Gastrocnemius medialis (tissue), 4 donors: ENCODE measurements at regions of chr20 and their contacts with region 1.

Region 1: DNA sequence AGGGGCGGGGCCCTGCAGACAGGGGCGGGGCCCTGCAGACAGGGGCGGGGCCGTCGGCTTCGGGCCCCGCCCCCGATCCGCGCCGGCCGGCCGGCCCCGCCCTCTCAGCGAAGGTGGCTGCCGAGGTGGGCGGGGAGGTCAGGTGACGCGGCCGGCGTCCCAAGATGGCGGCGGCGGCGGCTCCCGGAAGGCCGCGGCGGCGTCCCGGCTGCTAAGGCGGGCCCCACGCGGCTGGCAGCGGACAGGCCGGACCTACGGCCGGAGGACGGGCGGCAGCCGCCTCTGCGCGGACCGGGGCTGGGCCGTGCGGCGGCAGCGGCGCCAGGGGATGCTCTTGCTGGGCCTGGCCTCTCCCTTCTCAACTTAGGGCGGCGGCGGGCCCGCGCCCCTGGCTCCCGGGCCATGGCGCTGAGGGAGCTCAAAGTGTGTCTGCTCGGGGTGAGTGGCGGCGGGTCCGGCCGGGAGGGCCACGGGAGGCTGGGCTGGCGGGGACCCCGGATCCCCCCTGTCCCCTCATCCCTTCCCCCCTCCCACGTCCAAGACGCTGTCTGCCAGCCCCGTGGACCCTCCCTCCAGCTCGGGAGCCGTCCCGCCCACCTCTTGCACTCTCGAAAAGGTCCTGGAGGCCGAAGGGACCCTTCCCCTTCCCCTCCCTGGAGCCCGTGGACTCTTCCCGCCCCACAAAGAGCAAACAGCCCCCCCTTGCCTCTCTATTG is at the start of gene RAB22A:
- DNase-seq: peak; percentile 64 to 70
- ATAC-seq: peak; percentile 89 to 92
- H3K4me3 ChIP-seq: peak within 1 kb of the TSS; percentile 63 to 94 (median 86)
- H3K27ac ChIP-seq: peak within 1 kb of the TSS; percentile 80 to 89 (median 83)
- H3K4me1 ChIP-seq: peaks cover 15 to 16% of the 10 kb centered on the region in 2 donors
- H3K27me3 ChIP-seq: no peaks in the 10 kb centered on the region
- CTCF ChIP-seq: peak in 2 of 5 experiments; percentile 11 to 27
- POLR2A ChIP-seq: peak; percentile 95 to 96
- total RNA-seq, gene RAB22A: 8.0 to 10.9 (median 9.3) TPM

Region 2: DNA sequence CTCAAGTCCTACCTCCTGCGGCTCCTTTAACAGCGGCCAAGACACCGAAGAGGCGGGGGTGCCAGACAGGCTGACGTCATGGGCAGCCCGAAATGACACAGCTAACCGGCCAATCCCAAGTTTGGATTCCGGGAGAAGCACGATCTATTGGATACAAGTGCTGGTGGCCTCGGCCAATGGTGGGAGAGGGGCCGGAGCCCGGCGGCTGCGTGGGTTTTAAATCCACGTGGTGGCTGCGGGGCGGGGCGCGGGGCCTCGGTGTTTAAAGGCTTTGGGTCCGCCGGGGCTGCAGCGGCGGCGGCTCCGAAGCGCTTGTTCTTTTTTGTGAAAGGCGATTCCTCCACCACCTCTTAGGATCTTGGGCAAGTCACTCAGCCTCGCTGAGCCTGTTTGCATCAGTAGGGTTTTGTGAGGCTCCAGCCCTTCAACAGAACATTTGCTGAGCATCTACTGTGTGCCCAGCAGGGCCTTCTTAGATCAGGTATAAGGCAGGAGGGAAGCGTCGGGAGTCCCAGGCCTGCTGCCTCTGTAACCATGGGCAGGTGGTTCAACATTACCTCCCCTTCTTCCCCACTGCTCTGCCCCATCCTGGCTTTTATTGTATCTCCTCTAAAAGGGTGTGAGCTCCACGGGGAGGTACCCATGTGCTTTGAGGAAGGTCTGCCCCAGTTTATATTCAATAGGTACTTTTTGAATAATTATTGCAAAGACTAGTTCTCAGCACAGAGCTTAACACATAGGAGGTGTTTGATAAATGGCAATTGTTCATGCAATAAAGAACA is 591.1 kb before region 1 on chr20:
- in situ Hi-C with region 1: no loop called
- intact Hi-C with region 1: loop called (anchors 1 kb)
- DNase-seq: peak; percentile 97 to 98
- ATAC-seq: peak; percentile 92 to 96
- H3K4me3 ChIP-seq: peak overlapping the region; percentile 32 to 45 (median 36)
- H3K27ac ChIP-seq: peak overlapping the region; percentile 21 to 79 (median 57)
- H3K4me1 ChIP-seq: peaks cover 49 to 54% of the 10 kb centered on the region in 2 donors
- H3K27me3 ChIP-seq: no peaks in the 10 kb centered on the region
- CTCF ChIP-seq: no peak
- POLR2A ChIP-seq: no peak

Region 3: DNA sequence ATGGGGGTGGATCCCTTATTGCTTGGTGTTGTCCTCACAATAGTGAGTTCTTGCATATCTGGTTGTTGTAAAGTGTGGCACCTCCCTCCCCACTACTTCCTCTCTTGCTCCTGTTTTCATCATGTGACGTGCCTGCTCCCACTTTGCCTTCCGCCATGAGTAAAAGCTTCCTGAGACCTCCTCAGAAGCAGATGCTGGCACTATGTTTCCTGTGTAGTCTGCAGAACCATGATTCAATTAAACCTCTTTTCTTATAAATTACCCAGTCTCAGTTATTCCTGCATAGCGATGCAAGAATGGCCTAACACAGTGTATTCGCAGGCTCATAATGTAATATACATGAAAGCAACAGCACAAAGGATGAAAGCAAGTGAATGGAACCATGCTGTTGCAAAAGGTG is 52.9 kb before region 1 on chr20:
- in situ Hi-C with region 1: no loop called
- intact Hi-C with region 1: loop called (anchors 5 kb)
- DNase-seq: no peak
- ATAC-seq: no peak
- H3K4me3 ChIP-seq: no peak overlapping the region
- H3K27ac ChIP-seq: no peak overlapping the region
- H3K4me1 ChIP-seq: no peaks in the 10 kb centered on the region
- H3K27me3 ChIP-seq: no peaks in the 10 kb centered on the region
- CTCF ChIP-seq: no peak
- POLR2A ChIP-seq: no peak

Region 4: GRCh38 chr20:58330687-58331086 is 21.0 kb after region 1 on chr20:
- in situ Hi-C with region 1: no loop called
- intact Hi-C with region 1: loop called (anchors 2 kb)
- DNase-seq: peak; percentile 65 to 77
- ATAC-seq: peak; percentile 90 to 93
- H3K4me3 ChIP-seq: no peak overlapping the region
- H3K27ac ChIP-seq: peak overlapping the region; percentile 60 to 80 (median 66)
- H3K4me1 ChIP-seq: peaks cover 33 to 53% of the 10 kb centered on the region in 2 donors
- H3K27me3 ChIP-seq: no peaks in the 10 kb centered on the region
- CTCF ChIP-seq: no peak
- POLR2A ChIP-seq: no peak

Region 5: GRCh38 chr20:58388882-58389323 is 79.2 kb after region 1 on chr20 and contains the start of gene VAPB:
- in situ Hi-C with region 1: no loop called
- intact Hi-C with region 1: loop called (anchors 1 kb)
- DNase-seq: peak; percentile 89 to 93
- ATAC-seq: peak; percentile 93 to 94
- H3K4me3 ChIP-seq: peak within 1 kb of the TSS; percentile 76 to 90 (median 87)
- H3K27ac ChIP-seq: peak within 1 kb of the TSS; percentile 94 to 97 (median 96)
- H3K4me1 ChIP-seq: peaks cover 41 to 43% of the 10 kb centered on the region in 2 donors
- H3K27me3 ChIP-seq: no peaks in the 10 kb centered on the region
- CTCF ChIP-seq: no peak
- POLR2A ChIP-seq: peak; percentile 83 to 86
- total RNA-seq, gene VAPB: 30.4 to 37.7 (median 32.8) TPM

Region 6: GRCh38 chr20:58447511-58448391 is 138.0 kb after region 1 on chr20:
- in situ Hi-C with region 1: no loop called
- intact Hi-C with region 1: loop called (anchors 10 kb)
- DNase-seq: peak; percentile 14 to 53
- ATAC-seq: peak; percentile 56 to 86
- H3K4me3 ChIP-seq: no peak overlapping the region
- H3K27ac ChIP-seq: no peak overlapping the region
- H3K4me1 ChIP-seq: no peaks in the 10 kb centered on the region
- H3K27me3 ChIP-seq: no peaks in the 10 kb centered on the region
- CTCF ChIP-seq: peak; percentile 49 to 72 (median 58)
- POLR2A ChIP-seq: no peak

Region 7: DNA sequence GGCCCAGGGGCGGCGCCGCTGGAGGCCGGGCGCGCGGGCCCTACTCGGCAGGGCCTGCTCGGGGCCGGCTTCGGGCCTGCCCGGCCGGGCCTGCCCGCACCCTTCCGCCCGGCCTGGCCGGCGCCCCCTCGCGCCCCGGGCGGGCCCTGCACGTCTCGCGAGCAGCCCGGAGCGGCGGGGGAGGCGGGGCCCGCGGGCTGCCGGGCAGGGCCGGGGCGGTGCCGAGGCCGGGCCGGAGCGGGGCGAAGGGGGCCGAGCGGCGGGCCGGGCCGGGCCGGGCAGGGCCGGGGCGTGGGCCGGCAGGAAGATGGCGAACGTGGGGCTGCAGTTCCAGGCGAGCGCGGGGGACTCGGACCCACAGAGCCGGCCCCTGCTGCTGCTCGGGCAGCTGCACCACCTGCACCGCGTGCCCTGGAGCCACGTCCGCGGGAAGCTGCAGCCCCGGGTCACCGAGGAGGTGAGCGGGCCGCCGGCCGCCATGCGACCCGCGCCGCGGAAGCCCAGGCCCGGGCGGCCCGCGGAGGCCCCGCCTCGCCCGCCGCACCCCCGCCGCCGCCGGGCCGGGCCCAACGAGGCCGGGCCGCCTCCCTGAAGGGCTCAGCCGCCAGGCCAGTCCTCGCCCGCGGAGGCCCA is 383.0 kb after region 1 on chr20 and contains the start of gene NPEPL1:
- in situ Hi-C with region 1: no loop called
- intact Hi-C with region 1: loop called (anchors 5 kb)
- DNase-seq: peak in 1 of 2 donors; percentile 58
- ATAC-seq: peak; percentile 80 to 81
- H3K4me3 ChIP-seq: peak within 1 kb of the TSS; percentile 51 to 66 (median 58)
- H3K27ac ChIP-seq: peak within 1 kb of the TSS; percentile 81 to 90 (median 86)
- H3K4me1 ChIP-seq: peaks cover 32 to 38% of the 10 kb centered on the region in 2 donors
- H3K27me3 ChIP-seq: no peaks in the 10 kb centered on the region
- CTCF ChIP-seq: peak in 4 of 5 experiments; percentile 35 to 61 (median 45)
- POLR2A ChIP-seq: peak in 1 of 2 donors; percentile 38
- total RNA-seq, gene NPEPL1: 18.1 to 51.5 (median 34.3) TPM

Region 8: DNA sequence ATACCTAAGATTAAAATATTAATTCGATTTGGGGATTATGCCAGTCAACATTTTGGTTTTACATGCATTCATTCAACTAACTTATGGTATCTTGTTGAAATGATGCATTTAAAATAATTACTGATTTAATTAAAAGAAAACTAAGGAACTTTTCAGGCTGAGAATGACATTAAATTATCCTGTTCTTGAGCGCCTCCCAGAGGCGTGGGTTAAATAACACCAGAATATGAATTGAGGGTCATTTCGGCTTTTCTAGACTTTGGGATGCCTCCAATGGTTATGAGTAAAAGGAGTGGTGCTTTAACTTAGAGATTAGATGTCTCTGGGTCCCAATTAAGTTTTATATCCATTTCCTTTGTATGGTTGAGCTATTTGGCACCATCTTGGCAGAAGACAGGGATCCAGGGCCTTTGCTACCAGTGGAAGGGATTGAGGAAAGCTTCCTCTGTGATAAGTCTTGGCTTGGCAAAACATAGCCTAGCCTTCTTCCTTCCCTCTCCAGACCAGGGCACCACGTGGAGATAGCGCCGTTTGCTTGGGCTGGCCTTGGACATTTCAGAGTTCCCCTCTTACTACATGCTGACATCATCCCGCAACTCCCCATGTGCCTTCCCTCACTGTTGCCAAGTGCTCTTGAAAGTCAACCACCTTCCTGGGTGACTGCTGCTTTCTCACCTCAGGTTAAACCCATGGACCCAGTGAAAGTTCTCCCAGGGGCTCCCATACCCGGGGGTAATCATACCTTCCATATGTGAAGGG is 571.4 kb after region 1 on chr20:
- in situ Hi-C with region 1: no loop called
- intact Hi-C with region 1: no loop called
- DNase-seq: no peak
- ATAC-seq: no peak
- H3K4me3 ChIP-seq: no peak overlapping the region
- H3K27ac ChIP-seq: no peak overlapping the region
- H3K4me1 ChIP-seq: peaks cover 5 to 7% of the 10 kb centered on the region in 2 donors
- H3K27me3 ChIP-seq: peaks cover 0 to 12% (median 0%) of the 10 kb centered on the region in 3 donors
- CTCF ChIP-seq: no peak
- POLR2A ChIP-seq: no peak